PC-9 (cell line): ENCODE measurements at regions of chr12 and their contacts with region 1.

Region 1: GRCh38 chr12:119406308-119406707 is 71.8 kb downstream of the CCDC60 start:
- DNase-seq: no peak
- H3K4me3 ChIP-seq: no peak overlapping the region
- H3K27ac ChIP-seq: no peak overlapping the region
- H3K4me1 ChIP-seq: no peaks in the 10 kb centered on the region
- H3K27me3 ChIP-seq: peaks cover 25% of the 10 kb centered on the region
- CTCF ChIP-seq: no peak

Region 2: GRCh38 chr12:119274636-119275065 is 131.7 kb before region 1 on chr12:
- CTCF ChIA-PET with region 1: interaction called, 19 read pairs
- POLR2A ChIA-PET with region 1: no interaction called
- intact Hi-C with region 1: no loop called
- DNase-seq: no peak
- H3K4me3 ChIP-seq: no peak overlapping the region
- H3K27ac ChIP-seq: no peak overlapping the region
- H3K4me1 ChIP-seq: no peaks in the 10 kb centered on the region
- H3K27me3 ChIP-seq: peaks cover 24% of the 10 kb centered on the region
- CTCF ChIP-seq: no peak